Activated CD4-positive, alpha-beta T cell treated with anti-CD3 and anti-CD28 coated beads for 36 hours (primary cell): ENCODE measurements at regions of chr12 and their contacts with region 1.

Region 1: GRCh38 chr12:13347241-13348043 is 150.9 kb downstream of the EMP1 start:
- DNase-seq: peak; percentile 82
- ATAC-seq: peak; percentile 92
- H3K4me3 Mint-ChIP-seq: no peak overlapping the region
- H3K27ac Mint-ChIP-seq: peak overlapping the region; percentile 21
- H3K4me1 Mint-ChIP-seq: peaks cover 23% of the 10 kb centered on the region
- H3K27me3 Mint-ChIP-seq: peaks cover 45% of the 10 kb centered on the region

Region 2: DNA sequence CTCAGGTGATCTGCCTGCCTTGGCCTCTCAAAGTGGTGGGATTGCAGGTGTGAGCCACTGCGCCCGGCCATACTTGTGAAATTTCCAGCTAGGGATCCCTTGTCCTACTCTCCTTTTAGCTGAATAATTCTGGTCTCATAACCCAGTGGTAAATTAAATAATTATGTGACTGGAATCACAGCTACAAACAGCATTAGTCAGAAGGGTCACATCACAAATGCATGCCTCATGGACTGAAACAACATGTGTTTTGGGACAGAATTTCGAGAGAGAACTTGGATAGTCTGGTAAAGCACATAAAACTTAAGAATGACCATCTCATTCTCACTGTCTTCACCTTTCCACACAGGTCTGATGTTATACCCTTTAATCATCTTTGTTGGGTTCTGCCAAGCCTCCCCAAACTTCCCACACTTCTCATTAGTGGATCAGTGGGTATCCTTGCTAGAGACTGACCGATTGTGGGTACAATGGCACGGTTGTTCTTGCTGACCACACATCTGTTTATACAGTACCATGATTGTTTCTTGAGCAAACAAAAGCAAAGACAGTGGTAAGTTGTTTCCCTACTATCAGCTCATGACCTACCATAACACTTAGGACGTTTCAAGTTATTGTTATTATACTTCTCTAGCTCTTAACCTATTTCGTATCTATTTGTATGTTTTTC is 400.6 kb before region 1 on chr12:
- CTCF ChIA-PET with region 1: no interaction called
- POLR2A ChIA-PET with region 1: no interaction called
- intact Hi-C with region 1: no loop called
- DNase-seq: no peak
- ATAC-seq: no peak
- H3K4me3 Mint-ChIP-seq: no peak overlapping the region
- H3K27ac Mint-ChIP-seq: no peak overlapping the region
- H3K4me1 Mint-ChIP-seq: peaks cover 5% of the 10 kb centered on the region
- H3K27me3 Mint-ChIP-seq: no peaks in the 10 kb centered on the region

Region 3: GRCh38 chr12:13061421-13062128 is 285.9 kb before region 1 on chr12:
- CTCF ChIA-PET with region 1: no interaction called
- POLR2A ChIA-PET with region 1: no interaction called
- intact Hi-C with region 1: no loop called
- DNase-seq: no peak
- ATAC-seq: no peak
- H3K4me3 Mint-ChIP-seq: no peak overlapping the region
- H3K27ac Mint-ChIP-seq: no peak overlapping the region
- H3K4me1 Mint-ChIP-seq: peaks cover 4% of the 10 kb centered on the region
- H3K27me3 Mint-ChIP-seq: no peaks in the 10 kb centered on the region

Region 4: DNA sequence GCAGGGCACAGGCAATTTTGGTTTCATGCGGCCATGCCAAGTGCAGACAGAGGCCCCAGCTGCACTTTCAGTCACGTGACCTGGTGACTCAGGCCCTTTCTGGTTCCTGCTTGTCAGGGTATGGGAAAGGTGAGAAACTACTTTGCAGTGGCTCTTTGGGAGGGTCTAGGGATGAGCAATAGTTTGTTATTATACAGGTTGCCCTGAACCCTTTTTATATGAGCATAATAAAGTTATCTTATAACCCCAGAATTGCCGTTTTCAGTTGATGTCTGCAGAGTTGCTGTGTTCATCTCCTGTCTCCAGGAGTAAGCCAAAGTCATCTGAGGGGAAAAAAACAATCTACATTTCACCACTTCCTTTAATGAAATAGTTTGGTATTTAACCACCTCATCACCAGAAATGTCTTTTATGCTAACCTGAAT is 181.8 kb before region 1 on chr12:
- CTCF ChIA-PET with region 1: no interaction called
- POLR2A ChIA-PET with region 1: no interaction called
- intact Hi-C with region 1: loop called in 1 of 2 experiments (anchors 10 kb)
- DNase-seq: peak; percentile 92
- ATAC-seq: peak; percentile 97
- H3K4me3 Mint-ChIP-seq: no peak overlapping the region
- H3K27ac Mint-ChIP-seq: peak overlapping the region; percentile 58
- H3K4me1 Mint-ChIP-seq: peaks cover 24% of the 10 kb centered on the region
- H3K27me3 Mint-ChIP-seq: peaks cover 2% of the 10 kb centered on the region